CD8-positive, alpha-beta T cell (primary cell): ENCODE measurements at regions of chr19 and their contacts with region 1.

Region 1: GRCh38 chr19:43555185-43555770 is 20.0 kb downstream of the XRCC1 start:
- DNase-seq: peak; percentile 71 to 90 (median 86)
- ATAC-seq: peak; percentile 100
- H3K4me3 ChIP-seq: no peak overlapping the region
- H3K4me3 Mint-ChIP-seq: no peak overlapping the region
- H3K27ac ChIP-seq: no peak overlapping the region
- H3K27ac Mint-ChIP-seq: no peak overlapping the region
- H3K4me1 ChIP-seq: peaks cover 7% of the 10 kb centered on the region
- H3K4me1 Mint-ChIP-seq: peaks cover 17% of the 10 kb centered on the region
- H3K27me3 ChIP-seq: no peaks in the 10 kb centered on the region
- H3K27me3 Mint-ChIP-seq: no peaks in the 10 kb centered on the region
- CTCF ChIP-seq: peak; percentile 79

Region 2: GRCh38 chr19:43532962-43533545 is 22.2 kb before region 1 on chr19 and contains the start of gene ZNF575:
- CTCF ChIA-PET with region 1: interaction called, 41 read pairs
- POLR2A ChIA-PET with region 1: interaction called, 5 read pairs
- intact Hi-C with region 1: loop called (anchors 2 kb)
- DNase-seq: peak; percentile 63 to 94 (median 87)
- ATAC-seq: peak; percentile 43
- H3K4me3 ChIP-seq: peak within 1 kb of the TSS; percentile 65 to 79
- H3K4me3 Mint-ChIP-seq: peak within 1 kb of the TSS; percentile 98
- H3K27ac ChIP-seq: peak within 1 kb of the TSS; percentile 55 to 76
- H3K27ac Mint-ChIP-seq: peak within 1 kb of the TSS; percentile 97
- H3K4me1 ChIP-seq: peaks cover 7% of the 10 kb centered on the region
- H3K4me1 Mint-ChIP-seq: peaks cover 19% of the 10 kb centered on the region
- H3K27me3 ChIP-seq: no peaks in the 10 kb centered on the region
- H3K27me3 Mint-ChIP-seq: no peaks in the 10 kb centered on the region
- CTCF ChIP-seq: no peak
- total RNA-seq, gene ZNF575: 2.4 to 3.4 TPM

Region 3: DNA sequence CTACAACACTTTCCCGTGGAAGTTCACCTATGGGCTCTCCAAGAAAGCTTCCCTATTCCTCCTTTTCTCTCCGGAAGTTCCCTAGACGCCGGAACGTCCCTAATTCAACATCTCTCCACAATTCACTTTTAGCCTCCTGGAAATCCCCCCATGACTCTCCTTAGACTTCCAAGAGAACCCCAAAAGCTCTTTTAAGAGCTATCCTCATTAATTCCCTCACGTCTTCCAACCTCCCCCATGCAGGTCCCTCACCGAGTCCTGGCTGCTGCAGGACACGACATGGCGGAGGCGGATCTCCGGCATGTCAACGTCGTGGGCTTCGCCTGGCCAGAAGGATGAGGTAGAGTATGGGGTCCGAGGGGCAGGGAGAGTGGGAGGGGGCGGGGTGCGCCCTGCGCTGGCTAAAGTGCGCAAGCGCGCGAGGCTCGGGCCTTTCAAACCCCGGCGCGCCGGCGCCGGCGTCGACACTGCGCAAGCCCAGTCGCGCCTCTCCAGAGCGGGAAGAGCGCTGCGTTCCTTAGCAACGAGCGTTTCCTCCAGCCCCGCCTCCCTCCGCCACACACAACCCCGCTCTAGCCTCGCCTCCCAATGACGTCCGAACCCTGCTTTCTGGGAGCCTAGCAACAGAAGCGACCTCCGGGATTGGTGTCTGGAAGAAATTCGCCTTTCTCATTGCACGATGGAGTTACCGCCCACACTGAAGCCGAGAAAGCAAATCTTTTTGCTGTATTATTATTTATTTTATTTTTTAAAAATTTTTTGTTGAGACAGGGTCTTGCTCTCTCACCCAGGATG is 20.1 kb after region 1 on chr19 and contains the starts of genes PINLYP and XRCC1:
- CTCF ChIA-PET with region 1: interaction called, 58 read pairs
- POLR2A ChIA-PET with region 1: interaction called, 3 read pairs
- intact Hi-C with region 1: loop called (anchors 1 kb)
- DNase-seq: peak; percentile 93 to 100 (median 95)
- ATAC-seq: peak; percentile 96
- H3K4me3 ChIP-seq: peak within 1 kb of the TSS; percentile 87 to 98
- H3K4me3 Mint-ChIP-seq: peak within 1 kb of the TSS; percentile 95
- H3K27ac ChIP-seq: peak within 1 kb of the TSS; percentile 92 to 97
- H3K27ac Mint-ChIP-seq: peak within 1 kb of the TSS; percentile 96
- H3K4me1 ChIP-seq: peaks cover 29% of the 10 kb centered on the region
- H3K4me1 Mint-ChIP-seq: peaks cover 52% of the 10 kb centered on the region
- H3K27me3 ChIP-seq: no peaks in the 10 kb centered on the region
- H3K27me3 Mint-ChIP-seq: no peaks in the 10 kb centered on the region
- CTCF ChIP-seq: no peak
- total RNA-seq, gene PINLYP: 1.1 TPM
- total RNA-seq, gene XRCC1: 19.8 to 20.7 TPM

Region 4: GRCh38 chr19:43589678-43590077 is 34.4 kb after region 1 on chr19:
- CTCF ChIA-PET with region 1: interaction called, 190 read pairs
- POLR2A ChIA-PET with region 1: interaction called, 21 read pairs
- intact Hi-C with region 1: loop called (anchors 1 kb)
- DNase-seq: peak in 1 of 9 experiments; percentile 44
- ATAC-seq: no peak
- H3K4me3 ChIP-seq: no peak overlapping the region
- H3K4me3 Mint-ChIP-seq: no peak overlapping the region
- H3K27ac ChIP-seq: peak overlapping the region in 1 of 2 experiments; percentile 9
- H3K27ac Mint-ChIP-seq: peak overlapping the region; percentile 42
- H3K4me1 ChIP-seq: peaks cover 16% of the 10 kb centered on the region
- H3K4me1 Mint-ChIP-seq: peaks cover 14% of the 10 kb centered on the region
- H3K27me3 ChIP-seq: no peaks in the 10 kb centered on the region
- H3K27me3 Mint-ChIP-seq: no peaks in the 10 kb centered on the region
- CTCF ChIP-seq: no peak

Region 5: DNA sequence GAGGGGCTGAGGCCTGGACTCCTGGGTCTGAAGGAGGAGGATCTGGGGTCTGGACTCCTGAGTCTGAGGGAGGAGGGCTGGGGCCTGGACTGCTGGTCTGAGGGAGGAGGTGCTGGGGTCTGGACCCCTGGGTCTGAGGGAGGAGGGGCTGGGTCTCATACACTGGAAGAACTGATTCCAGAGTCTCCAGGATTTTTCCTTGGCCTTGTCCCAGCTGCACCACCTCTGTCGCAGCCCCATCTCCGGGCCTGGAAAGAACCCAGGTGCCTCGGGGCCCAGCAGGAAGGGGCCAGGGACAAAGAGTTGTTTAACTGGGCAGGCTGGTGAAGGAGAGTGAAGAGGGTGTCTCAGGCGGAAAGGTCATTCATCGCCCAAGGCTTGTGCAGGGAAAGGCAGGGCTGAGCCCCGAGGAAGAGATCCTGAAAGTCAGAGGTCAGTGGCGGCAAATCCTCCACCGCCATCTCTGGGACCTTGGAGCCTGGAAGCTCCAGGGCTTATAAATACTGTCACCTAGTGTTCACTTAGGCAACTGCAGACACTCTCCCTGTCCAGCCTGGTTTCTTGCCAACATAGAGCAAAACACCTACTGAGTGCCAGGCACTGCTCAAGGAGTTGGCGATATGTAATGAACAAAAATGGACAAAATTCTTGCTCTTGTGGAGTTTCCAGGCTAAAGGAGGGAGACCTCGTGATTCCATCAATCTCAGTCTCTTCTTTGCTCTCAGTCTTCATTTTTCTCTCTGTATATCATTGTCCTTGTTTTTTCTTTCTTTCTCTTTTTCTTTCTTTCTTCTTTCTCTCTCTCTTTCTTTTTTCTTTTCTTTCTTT is 229.9 kb after region 1 on chr19:
- CTCF ChIA-PET with region 1: interaction called, 6 read pairs
- POLR2A ChIA-PET with region 1: no interaction called
- intact Hi-C with region 1: loop called in 1 of 2 experiments (anchors 1 kb)
- DNase-seq: peak in 8 of 9 experiments; percentile 27 to 82 (median 52)
- ATAC-seq: peak; percentile 38
- H3K4me3 ChIP-seq: no peak overlapping the region
- H3K4me3 Mint-ChIP-seq: peak overlapping the region; percentile 56
- H3K27ac ChIP-seq: peak overlapping the region; percentile 25 to 54
- H3K27ac Mint-ChIP-seq: peak overlapping the region; percentile 96
- H3K4me1 ChIP-seq: peaks cover 36% of the 10 kb centered on the region
- H3K4me1 Mint-ChIP-seq: peaks cover 40% of the 10 kb centered on the region
- H3K27me3 ChIP-seq: peaks cover 0 to 4% of the 10 kb centered on the region in 2 experiments
- H3K27me3 Mint-ChIP-seq: peaks cover 9% of the 10 kb centered on the region
- CTCF ChIP-seq: peak; percentile 94

Region 6: GRCh38 chr19:44149776-44150175 is 594.5 kb after region 1 on chr19:
- CTCF ChIA-PET with region 1: no interaction called
- POLR2A ChIA-PET with region 1: no interaction called
- intact Hi-C with region 1: no loop called
- DNase-seq: no peak
- ATAC-seq: no peak
- H3K4me3 ChIP-seq: no peak overlapping the region
- H3K4me3 Mint-ChIP-seq: no peak overlapping the region
- H3K27ac ChIP-seq: no peak overlapping the region
- H3K27ac Mint-ChIP-seq: no peak overlapping the region
- H3K4me1 ChIP-seq: no peaks in the 10 kb centered on the region
- H3K4me1 Mint-ChIP-seq: no peaks in the 10 kb centered on the region
- H3K27me3 ChIP-seq: no peaks in the 10 kb centered on the region
- H3K27me3 Mint-ChIP-seq: no peaks in the 10 kb centered on the region
- CTCF ChIP-seq: no peak